Cardiac septum (tissue), 1 donor: ENCODE measurements at regions of chr11 and their contacts with region 1.

Region 1: GRCh38 chr11:47176328-47177228 is at the start of gene ARFGAP2:
- DNase-seq: peak; percentile 99
- total RNA-seq, gene ARFGAP2: 72.3 TPM

Region 2: GRCh38 chr11:47047972-47048371 is 128.6 kb before region 1 on chr11:
- intact Hi-C with region 1: no loop called
- DNase-seq: no peak

Region 3: GRCh38 chr11:47213985-47214564 is 37.5 kb after region 1 on chr11:
- intact Hi-C with region 1: loop called (anchors 2 kb)
- DNase-seq: peak; percentile 96

Region 4: GRCh38 chr11:47259178-47259977 is 82.8 kb after region 1 on chr11:
- intact Hi-C with region 1: loop called (anchors 1 kb)
- DNase-seq: no peak

Region 5: DNA sequence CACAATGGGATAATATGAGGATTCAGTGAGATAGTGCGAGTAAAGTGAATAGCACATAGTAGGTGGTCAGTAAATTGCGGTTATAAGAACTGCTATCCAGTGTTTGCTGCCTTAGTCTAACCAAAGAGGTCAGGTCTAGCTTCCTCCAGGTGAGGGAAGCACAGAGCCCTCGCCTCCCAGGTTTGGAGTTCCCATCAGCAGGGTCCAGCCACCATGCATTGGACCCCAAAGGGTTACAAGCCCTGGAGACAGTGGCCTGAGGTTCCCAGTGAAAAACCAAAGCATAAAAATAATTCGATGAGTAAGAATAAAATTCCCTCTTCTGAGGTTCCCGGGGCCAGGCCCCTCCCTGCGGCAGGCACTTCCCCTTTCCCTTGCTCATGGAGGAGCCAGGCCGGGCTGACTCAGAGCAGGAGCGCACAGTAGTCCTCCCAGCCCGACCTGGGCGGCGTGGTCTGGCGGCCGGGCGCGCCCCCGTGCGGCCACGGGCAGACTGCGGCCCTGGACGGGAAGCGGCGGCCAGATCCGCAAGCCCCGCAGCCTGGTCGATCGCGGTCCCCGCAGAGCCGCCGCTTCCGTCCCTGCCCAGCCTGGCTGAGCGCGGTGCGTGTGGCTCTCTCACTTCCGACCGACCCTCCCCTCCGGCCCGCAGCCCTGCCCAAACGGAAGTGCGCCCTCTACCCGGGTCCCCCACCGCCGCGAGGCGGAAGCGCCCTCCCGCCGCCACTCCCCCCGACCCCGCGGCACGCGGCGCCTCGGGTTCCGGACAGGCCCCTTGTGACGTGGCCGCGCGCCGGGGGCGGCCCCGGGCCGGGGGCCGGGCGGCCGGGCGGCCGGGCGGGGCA is 231.4 kb after region 1 on chr11 and contains the start of gene SLC39A13:
- intact Hi-C with region 1: loop called (anchors 5 kb)
- DNase-seq: peak; percentile 98
- total RNA-seq, gene SLC39A13: 72.2 TPM